ENCODE measurements at regions of chr6 and their contacts with region 1.

Region 1: GRCh38 chr6:2579241-2579761 is 171.4 kb downstream of the MYLK4 start:
- DNase-seq: no peak

Region 2: GRCh38 chr6:1940381-1940780 is 638.9 kb before region 1 on chr6:
- intact Hi-C with region 1: no loop called
- DNase-seq: no peak

Region 3: DNA sequence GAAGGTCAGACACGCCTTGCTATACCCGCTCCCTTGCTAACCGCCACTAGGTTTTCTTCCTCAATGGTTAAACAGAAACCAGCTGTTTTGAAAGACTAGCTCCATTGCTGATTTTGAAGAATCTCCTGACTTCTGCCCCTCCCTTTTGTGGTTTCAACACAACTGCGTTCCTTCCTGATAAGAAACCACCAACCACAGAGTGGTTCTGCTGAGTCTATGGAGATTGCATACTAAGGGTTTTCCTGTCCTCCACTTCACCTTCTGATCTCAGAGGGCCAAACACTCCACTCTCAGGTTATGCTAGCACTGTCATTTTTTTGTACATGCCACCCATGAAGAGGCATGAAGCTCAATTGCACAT is 36.5 kb before region 1 on chr6:
- intact Hi-C with region 1: no loop called
- DNase-seq: no peak

Region 4: DNA sequence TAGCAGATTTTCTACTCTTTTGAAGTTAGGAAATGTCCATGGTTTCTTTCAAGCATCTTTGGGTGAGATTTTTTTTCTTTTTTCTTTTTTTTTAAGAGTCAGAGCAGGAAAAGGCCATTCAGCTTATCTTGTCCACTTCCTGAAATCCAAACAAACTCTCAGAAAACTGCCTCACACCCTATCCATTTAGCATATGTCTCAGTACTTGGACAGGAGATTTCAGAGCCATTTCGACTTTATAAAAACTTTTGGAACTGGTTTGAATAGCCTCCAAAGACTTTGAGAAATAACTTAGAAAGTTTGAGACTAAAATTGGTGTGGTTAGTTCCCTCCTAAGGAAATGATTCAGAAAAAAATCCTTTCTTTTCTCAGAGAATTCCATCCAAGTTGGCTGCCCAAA is 46.3 kb after region 1 on chr6:
- intact Hi-C with region 1: loop called (anchors 2 kb)
- DNase-seq: no peak